Esophagus muscularis mucosa (tissue), 4 donors: ENCODE measurements at regions of chr2 and their contacts with region 1.

Region 1: GRCh38 chr2:158745044-158745865 is 49.9 kb upstream of the DAPL1 start:
- DNase-seq: no peak
- H3K4me3 ChIP-seq: no peak overlapping the region
- H3K27ac ChIP-seq: peak overlapping the region in 2 of 4 donors; percentile 16 to 26
- H3K4me1 ChIP-seq: peaks cover 0 to 24% (median 9%) of the 10 kb centered on the region in 4 donors
- H3K27me3 ChIP-seq: peaks cover 0 to 29% (median 0%) of the 10 kb centered on the region in 4 donors
- CTCF ChIP-seq: peak; percentile 48 to 59 (median 52)
- EP300 ChIP-seq: no peak
- POLR2A ChIP-seq: no peak

Region 2: GRCh38 chr2:158024288-158024898 is 720.9 kb before region 1 on chr2:
- intact Hi-C with region 1: loop called (anchors 2 kb)
- DNase-seq: peak; percentile 86
- H3K4me3 ChIP-seq: no peak overlapping the region
- H3K27ac ChIP-seq: no peak overlapping the region
- H3K4me1 ChIP-seq: no peaks in the 10 kb centered on the region
- H3K27me3 ChIP-seq: no peaks in the 10 kb centered on the region
- CTCF ChIP-seq: peak; percentile 73 to 89 (median 74)
- EP300 ChIP-seq: no peak
- POLR2A ChIP-seq: no peak

Region 3: DNA sequence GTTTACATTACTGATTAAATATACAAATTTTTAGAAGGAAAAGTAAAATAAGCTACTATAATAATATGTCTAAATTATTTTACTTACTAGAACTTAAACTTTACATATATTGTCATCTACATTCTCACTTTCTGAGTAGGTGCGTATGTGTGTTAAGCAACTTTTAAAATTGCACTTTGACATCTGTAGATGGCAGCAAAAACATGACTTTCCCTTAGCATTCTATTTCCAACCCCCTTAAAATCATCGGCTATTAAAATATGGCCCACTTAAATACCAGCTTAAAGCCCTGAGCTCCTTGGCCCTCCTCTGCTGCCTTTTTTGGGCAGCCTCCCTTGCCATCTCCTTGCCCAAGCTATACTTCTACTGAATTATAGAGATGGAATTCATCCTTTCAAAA is 565.6 kb before region 1 on chr2:
- intact Hi-C with region 1: loop called (anchors 5 kb)
- DNase-seq: no peak
- H3K4me3 ChIP-seq: no peak overlapping the region
- H3K27ac ChIP-seq: no peak overlapping the region
- H3K4me1 ChIP-seq: peaks cover 2 to 6% (median 3%) of the 10 kb centered on the region in 4 donors
- H3K27me3 ChIP-seq: no peaks in the 10 kb centered on the region
- CTCF ChIP-seq: peak in 2 of 3 experiments; percentile 6 to 44
- EP300 ChIP-seq: no peak
- POLR2A ChIP-seq: no peak

Region 4: DNA sequence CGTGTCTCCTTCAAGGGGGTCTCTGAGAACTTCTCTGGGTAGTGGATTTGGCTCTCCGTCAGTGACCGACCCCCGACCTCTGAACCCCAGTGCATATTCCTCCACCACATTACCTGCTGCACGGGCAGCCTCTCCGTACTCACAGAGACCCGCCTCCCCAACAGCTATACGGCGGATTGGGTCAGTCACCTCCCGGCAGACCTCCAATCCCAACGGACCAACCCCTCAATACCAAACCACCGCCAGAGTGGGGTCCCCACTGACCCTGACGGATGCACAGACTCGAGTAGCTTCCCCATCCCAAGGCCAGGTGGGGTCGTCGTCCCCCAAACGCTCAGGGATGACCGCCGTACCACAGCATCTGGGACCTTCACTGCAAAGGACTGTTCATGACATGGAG is 120.3 kb before region 1 on chr2:
- intact Hi-C with region 1: no loop called
- DNase-seq: no peak
- H3K4me3 ChIP-seq: no peak overlapping the region
- H3K27ac ChIP-seq: no peak overlapping the region
- H3K4me1 ChIP-seq: no peaks in the 10 kb centered on the region
- H3K27me3 ChIP-seq: no peaks in the 10 kb centered on the region
- CTCF ChIP-seq: no peak
- EP300 ChIP-seq: no peak
- POLR2A ChIP-seq: no peak

Region 5: GRCh38 chr2:158713523-158714138 is 31.6 kb before region 1 on chr2:
- intact Hi-C with region 1: no loop called
- DNase-seq: no peak
- H3K4me3 ChIP-seq: no peak overlapping the region
- H3K27ac ChIP-seq: no peak overlapping the region
- H3K4me1 ChIP-seq: peaks cover 0 to 26% (median 13%) of the 10 kb centered on the region in 4 donors
- H3K27me3 ChIP-seq: no peaks in the 10 kb centered on the region
- CTCF ChIP-seq: no peak
- EP300 ChIP-seq: no peak
- POLR2A ChIP-seq: no peak